SK-N-SH (cell line): ENCODE measurements at regions of chr20 and their contacts with region 1.

Region 1: DNA sequence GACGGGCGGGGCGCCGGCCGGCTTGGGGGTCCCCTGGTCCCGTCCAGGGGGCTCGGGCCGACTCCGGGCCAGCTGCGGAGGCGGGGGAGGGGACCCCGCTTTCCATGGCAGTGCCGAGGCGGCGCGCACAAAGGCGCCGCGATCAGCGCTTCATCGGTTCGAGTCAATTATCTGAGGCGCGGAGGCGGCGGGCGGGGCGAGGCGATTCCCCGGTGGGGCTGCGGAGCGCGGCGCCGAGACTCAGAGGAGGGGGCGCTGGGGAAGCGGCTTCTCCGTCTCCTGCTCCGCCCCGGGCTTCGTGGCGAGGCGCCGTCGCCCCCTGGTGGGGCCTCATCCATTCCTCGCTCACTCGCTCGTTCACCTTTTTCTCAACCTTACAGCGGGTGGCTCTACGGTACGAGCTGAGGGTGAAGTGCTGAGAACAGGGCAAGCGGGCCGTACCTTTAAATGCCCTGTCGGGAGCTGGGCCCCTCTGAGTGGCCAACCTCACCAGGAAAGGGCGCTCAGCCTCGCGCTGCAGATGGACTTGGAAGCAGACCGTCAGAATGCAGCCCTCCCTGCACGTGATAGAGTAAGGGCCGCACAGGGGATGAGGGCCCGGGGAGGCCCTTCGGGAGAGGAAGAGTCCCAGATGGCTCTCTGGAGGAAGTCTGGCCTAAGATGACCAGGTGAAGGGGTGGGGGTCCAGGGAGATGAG is 39.9 kb downstream of the SLC52A3 start:
- DNase-seq: peak; percentile 95
- H3K4me3 ChIP-seq: peak overlapping the region; percentile 52 to 60
- H3K27ac ChIP-seq: no peak overlapping the region; a peak in 1 of 4 replicates
- H3K4me1 ChIP-seq: no peaks in the 10 kb centered on the region; a peak in 1 of 4 replicates
- H3K27me3 ChIP-seq: peaks cover 14% of the 10 kb centered on the region; the same call in 1 of the 2 replicates
- CTCF ChIP-seq: peak; percentile 62
- EP300 ChIP-seq: no peak
- RAD21 ChIP-seq: peak; percentile 89

Region 2: DNA sequence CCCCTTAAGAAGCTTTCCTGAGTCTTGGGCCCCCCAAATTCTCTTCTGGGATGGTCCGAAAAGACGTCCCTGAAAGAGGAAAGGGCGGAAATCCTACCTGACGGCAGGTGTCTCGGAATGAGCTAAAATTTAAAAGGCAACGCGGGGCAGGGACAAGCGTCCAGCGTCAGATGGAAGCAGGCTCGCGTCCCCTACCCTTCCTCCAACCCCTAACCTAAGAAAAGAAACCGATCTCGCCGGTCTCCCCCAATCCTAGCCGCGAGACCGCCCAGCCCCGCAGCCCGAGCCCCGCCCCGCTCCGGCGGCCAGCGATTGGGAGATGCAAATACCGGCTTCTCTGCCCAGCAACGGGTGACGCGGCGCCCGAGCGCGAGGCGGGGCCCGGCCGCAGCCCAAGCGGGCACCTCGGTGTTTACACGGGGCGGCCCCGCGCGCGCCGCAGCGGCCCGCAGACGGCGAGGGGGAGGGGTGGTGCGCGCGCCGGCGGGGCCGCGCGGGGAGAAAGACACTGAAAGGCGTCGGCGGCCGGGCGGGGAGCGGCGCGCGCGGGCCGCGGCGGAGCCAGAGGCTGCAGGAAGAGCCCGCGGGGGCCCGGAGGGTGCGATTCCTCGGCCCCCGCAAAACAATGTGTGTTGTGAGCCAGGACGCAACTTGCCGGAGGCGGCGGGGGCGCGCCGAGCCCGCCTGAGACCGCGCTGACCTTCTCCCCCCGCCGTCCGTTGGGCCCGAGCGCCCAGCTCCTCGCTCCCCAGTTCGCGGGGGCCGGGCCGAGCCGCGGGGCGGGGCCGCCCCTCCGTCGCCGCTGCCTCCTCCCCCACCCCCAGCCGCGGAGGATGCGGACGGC is 403.1 kb before region 1 on chr20 and contains the start of gene SOX12:
- CTCF ChIA-PET with region 1: no interaction called
- POLR2A ChIA-PET with region 1: no interaction called
- DNase-seq: peak; percentile 91
- H3K4me3 ChIP-seq: peak within 1 kb of the TSS; percentile 93 to 98
- H3K27ac ChIP-seq: peak within 1 kb of the TSS; percentile 95 to 97
- H3K4me1 ChIP-seq: peaks cover 23 to 29% of the 10 kb centered on the region in 2 experiments; a peak in 3 of 4 replicates
- H3K27me3 ChIP-seq: no peaks in the 10 kb centered on the region
- CTCF ChIP-seq: no peak
- EP300 ChIP-seq: peak; percentile 26 to 57; a peak in 2 of 4 replicates
- RAD21 ChIP-seq: no peak
- polyA plus RNA-seq, gene SOX12: 7.0 and 11.3 TPM in 2 replicates

Region 3: GRCh38 chr20:653110-653589 is 75.2 kb before region 1 on chr20 and contains the start of gene SRXN1:
- CTCF ChIA-PET with region 1: interaction called, 62 read pairs
- POLR2A ChIA-PET with region 1: interaction called, 5 read pairs
- DNase-seq: peak; percentile 97
- H3K4me3 ChIP-seq: peak within 1 kb of the TSS; percentile 71 to 89
- H3K27ac ChIP-seq: peak within 1 kb of the TSS; percentile 53 to 68; a peak in 3 of 4 replicates
- H3K4me1 ChIP-seq: peaks cover 0 to 17% of the 10 kb centered on the region in 2 experiments; a peak in 2 of 4 replicates
- H3K27me3 ChIP-seq: no peaks in the 10 kb centered on the region
- CTCF ChIP-seq: peak; percentile 53
- EP300 ChIP-seq: no peak
- RAD21 ChIP-seq: peak; percentile 60
- polyA plus RNA-seq, gene SRXN1: 26.2 and 36.0 TPM in 2 replicates

Region 4: DNA sequence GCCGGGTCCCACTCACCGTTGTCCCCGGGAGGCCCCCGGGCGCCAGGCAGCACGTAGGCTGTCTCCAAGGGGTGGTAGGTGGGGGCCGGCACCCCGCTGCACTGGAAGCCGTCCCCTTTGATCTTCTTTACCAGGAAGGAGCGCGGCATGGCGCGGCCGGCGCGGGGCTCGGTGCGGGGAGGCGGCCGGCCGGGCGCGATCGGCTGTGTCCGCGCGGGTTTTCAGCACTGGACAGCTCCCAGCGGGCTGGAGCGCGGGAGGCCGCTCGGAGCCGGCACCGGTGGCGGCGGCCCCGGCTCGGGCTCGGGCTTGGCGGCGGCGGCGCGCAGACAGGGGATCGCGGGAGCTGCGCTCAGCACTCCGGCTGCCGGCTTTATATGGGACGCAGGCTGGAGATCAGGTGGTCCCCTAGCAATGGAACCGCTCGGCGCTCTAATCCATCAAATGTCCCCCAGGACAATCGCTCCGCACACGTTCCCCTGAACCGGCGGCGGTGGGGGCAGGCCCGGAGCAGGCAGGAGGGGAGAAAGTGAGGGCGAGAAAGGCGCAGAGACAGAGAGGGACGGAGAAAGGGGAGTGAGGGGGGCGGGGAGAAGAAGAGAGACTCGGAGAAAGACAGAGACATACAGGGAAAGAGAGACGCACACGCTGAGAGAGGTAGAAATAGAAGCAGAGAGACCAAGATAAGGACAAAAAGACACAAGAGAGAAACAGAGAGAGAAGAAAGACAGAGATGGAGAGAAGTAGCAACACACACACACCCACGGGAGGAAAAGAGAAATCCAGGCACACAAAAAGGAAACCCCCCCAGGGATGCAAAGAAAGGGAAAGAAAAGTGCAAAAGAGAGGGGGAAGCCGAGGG is 52.7 kb before region 1 on chr20 and contains the start of gene SCRT2:
- CTCF ChIA-PET with region 1: interaction called, 18 read pairs
- POLR2A ChIA-PET with region 1: no interaction called
- DNase-seq: peak; percentile 81
- H3K4me3 ChIP-seq: peak within 1 kb of the TSS; percentile 26 to 46
- H3K27ac ChIP-seq: peak within 1 kb of the TSS in 1 of 2 experiments; percentile 74; a peak in 2 of 4 replicates
- H3K4me1 ChIP-seq: peaks cover 0 to 10% of the 10 kb centered on the region in 2 experiments; a peak in 1 of 4 replicates
- H3K27me3 ChIP-seq: peaks cover 24% of the 10 kb centered on the region; the same call in 1 of the 2 replicates
- CTCF ChIP-seq: no peak
- EP300 ChIP-seq: no peak
- RAD21 ChIP-seq: no peak
- polyA plus RNA-seq, gene SCRT2: not detected in 2 replicates

Region 5: DNA sequence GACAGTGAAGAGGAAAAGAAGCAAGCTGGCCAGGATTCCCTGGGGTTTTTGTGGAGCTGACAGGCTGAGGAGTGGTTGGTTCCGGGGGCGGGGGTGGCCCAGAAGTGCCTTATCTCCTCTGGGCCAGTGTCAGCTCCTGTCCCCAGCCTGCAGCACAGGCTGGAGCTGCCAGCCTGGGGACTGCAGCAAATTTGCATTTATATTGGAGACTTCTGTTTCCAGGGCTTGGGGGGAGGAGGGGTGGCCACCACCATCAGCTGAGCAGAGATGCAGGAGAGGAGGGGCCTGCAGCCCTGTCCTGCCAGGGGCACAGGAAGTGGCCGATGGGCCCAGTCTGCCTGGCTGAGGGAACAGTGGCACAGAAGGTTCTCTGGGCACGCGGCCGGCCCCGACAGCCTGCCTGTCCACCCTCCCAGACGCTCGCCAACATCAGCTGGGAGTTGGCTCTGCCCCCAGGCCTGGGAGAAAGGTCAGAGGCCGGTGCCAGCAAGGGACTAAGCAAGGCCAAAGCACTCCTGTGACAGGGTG is 28.5 kb before region 1 on chr20:
- CTCF ChIA-PET with region 1: interaction called, 12 read pairs
- POLR2A ChIA-PET with region 1: interaction called, 3 read pairs
- DNase-seq: peak; percentile 92
- H3K4me3 ChIP-seq: no peak overlapping the region
- H3K27ac ChIP-seq: peak overlapping the region in 1 of 2 experiments; percentile 90; a peak in 2 of 4 replicates
- H3K4me1 ChIP-seq: peaks cover 0 to 24% of the 10 kb centered on the region in 2 experiments; a peak in 1 of 4 replicates
- H3K27me3 ChIP-seq: peaks cover 9% of the 10 kb centered on the region; the same call in 1 of the 2 replicates
- CTCF ChIP-seq: no peak
- EP300 ChIP-seq: peak in 1 of 2 experiments; percentile 83; a peak in 2 of 4 replicates
- RAD21 ChIP-seq: peak; percentile 25

Region 6: GRCh38 chr20:714453-714852 is 13.9 kb before region 1 on chr20:
- CTCF ChIA-PET with region 1: interaction called, 29 read pairs
- POLR2A ChIA-PET with region 1: no interaction called
- DNase-seq: no peak
- H3K4me3 ChIP-seq: no peak overlapping the region
- H3K27ac ChIP-seq: no peak overlapping the region
- H3K4me1 ChIP-seq: peaks cover 0 to 4% of the 10 kb centered on the region in 2 experiments; a peak in 1 of 4 replicates
- H3K27me3 ChIP-seq: peaks cover under 1% of the 10 kb centered on the region; the same call in 1 of the 2 replicates
- CTCF ChIP-seq: no peak
- EP300 ChIP-seq: no peak
- RAD21 ChIP-seq: no peak

Region 7: DNA sequence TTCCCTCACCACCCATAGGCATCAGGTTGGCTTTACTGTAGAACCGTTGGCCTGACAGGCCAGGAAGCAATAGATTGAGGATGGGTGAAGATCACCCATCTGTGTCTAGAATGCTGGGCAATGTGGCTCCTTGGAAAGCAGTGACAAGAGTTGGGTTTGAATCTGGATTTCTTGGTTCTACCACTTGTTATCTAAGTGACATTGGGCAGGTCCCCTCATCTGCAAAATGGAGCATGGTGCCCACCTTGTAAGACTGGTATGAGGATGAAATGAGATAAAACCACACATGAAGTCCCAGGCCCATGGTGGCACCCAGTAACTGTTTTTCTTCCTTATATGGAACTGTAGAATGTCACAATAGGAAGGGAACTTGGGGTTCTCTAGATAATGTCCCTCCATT is 785.4 kb after region 1 on chr20:
- CTCF ChIA-PET with region 1: no interaction called
- POLR2A ChIA-PET with region 1: no interaction called
- DNase-seq: no peak
- H3K4me3 ChIP-seq: no peak overlapping the region
- H3K27ac ChIP-seq: no peak overlapping the region
- H3K4me1 ChIP-seq: no peaks in the 10 kb centered on the region
- H3K27me3 ChIP-seq: peaks cover 10% of the 10 kb centered on the region; the same call in 1 of the 2 replicates
- CTCF ChIP-seq: no peak
- EP300 ChIP-seq: no peak
- RAD21 ChIP-seq: no peak